ENCODE measurements at regions of chr19 and their contacts with region 1.

Region 1: DNA sequence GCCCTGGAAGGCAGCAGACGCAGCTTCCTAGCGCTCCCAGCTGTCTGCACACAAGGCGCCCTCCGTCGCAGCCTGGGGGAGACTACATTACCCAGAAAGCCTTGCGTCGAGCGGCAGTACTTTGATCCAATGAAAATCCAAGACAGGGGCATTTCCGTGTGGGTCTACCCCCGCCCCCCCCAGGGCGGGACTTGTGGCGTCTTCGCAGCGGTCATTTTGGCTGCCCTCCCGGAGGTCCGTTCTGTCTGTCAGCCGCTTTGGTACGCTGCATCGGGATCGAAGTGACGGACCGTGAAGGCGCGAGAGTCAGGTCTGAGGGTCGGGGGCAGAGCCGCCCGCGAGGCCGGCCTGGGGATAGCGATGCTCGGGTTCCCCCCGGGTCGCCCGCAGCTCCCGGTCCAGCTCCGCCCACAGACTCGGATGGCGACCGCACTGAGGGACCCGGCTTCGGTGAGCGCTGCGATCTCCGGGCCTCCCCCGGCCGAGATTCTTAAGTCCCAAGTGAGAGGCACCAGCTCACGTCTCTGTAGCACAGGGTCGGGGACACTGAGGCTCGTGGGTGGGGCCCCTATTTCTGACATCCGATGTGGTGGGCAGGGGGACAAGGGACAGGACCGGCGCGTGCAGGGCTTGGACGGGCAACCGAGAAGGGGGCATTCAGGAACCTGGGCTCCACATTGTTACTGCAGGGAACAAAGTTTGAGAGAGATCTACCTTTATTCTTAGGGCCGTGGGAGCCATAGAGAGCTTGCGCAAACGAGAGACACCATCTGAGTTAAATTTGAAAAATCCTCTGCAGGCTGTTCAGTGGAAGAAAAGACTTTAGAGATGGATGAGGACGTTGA is at the start of gene ZNF211:
- DNase-seq: peak; percentile 75 to 94 (median 85)
- ATAC-seq: peak; percentile 97 to 99
- H3K4me3 Mint-ChIP-seq: peak within 1 kb of the TSS; percentile 84 to 97 (median 94)
- H3K27ac Mint-ChIP-seq: peak within 1 kb of the TSS; percentile 78 to 96 (median 94)
- H3K4me1 Mint-ChIP-seq: peaks cover 14 to 29% (median 25%) of the 10 kb centered on the region in 4 donors
- H3K27me3 Mint-ChIP-seq: no peaks in the 10 kb centered on the region
- polyA plus RNA-seq, gene ZNF211: 13.5 to 18.5 (median 15.5) TPM

Region 2: GRCh38 chr19:57559404-57560025 is 73.7 kb before region 1 on chr19 and contains the start of gene ZNF550:
- POLR2A ChIA-PET with region 1: no interaction called
- DNase-seq: peak; percentile 78 to 94 (median 84)
- ATAC-seq: peak; percentile 96 to 97
- H3K4me3 Mint-ChIP-seq: peak within 1 kb of the TSS; percentile 95 to 99 (median 98)
- H3K27ac Mint-ChIP-seq: peak within 1 kb of the TSS; percentile 88 to 98 (median 95)
- H3K4me1 Mint-ChIP-seq: peaks cover 28 to 46% (median 36%) of the 10 kb centered on the region in 4 donors
- H3K27me3 Mint-ChIP-seq: peaks cover 0 to 5% (median 0%) of the 10 kb centered on the region in 5 donors
- polyA plus RNA-seq, gene ZNF550: 4.1 to 17.8 (median 6.1) TPM

Region 3: GRCh38 chr19:57613941-57614743 is 19.1 kb before region 1 on chr19 and contains the start of gene ZNF134:
- POLR2A ChIA-PET with region 1: interaction called, 22 read pairs
- DNase-seq: peak; percentile 80 to 95 (median 88)
- ATAC-seq: peak; percentile 99 to 100
- H3K4me3 Mint-ChIP-seq: peak within 1 kb of the TSS; percentile 86 to 94 (median 92)
- H3K27ac Mint-ChIP-seq: peak within 1 kb of the TSS; percentile 67 to 94 (median 89)
- H3K4me1 Mint-ChIP-seq: peaks cover 28 to 41% (median 38%) of the 10 kb centered on the region in 4 donors
- H3K27me3 Mint-ChIP-seq: no peaks in the 10 kb centered on the region
- polyA plus RNA-seq, gene ZNF134: 9.6 to 15.1 (median 13.7) TPM

Region 4: DNA sequence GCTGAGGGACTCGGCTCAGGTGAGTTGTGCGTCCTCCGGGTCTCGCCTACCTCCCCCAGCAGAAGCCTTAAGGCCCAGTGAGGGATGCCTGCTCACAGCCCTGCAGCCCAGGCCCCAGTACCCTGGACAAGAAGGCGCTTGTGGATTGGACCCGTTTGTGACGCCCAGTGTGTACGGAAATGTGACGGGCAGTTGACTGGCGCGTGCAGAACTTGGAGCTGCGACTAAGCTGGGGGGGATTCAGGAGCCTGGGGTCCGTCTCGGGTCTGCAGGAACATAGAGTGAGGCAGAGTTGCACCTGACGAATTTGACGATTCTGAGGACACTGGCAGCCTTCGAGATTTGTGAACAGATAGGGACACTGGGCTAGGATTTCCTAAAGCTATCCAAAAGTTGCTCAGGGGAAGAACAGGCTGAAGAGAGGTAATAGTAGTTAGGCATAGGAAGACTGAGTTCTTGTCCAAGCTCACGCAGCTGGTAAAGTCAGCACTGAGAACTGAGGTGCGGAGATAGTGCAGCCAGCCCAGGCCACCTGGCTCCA is 49.1 kb after region 1 on chr19:
- POLR2A ChIA-PET with region 1: interaction called, 20 read pairs
- DNase-seq: no peak
- ATAC-seq: no peak
- H3K4me3 Mint-ChIP-seq: peak overlapping the region; percentile 96 to 99 (median 98)
- H3K27ac Mint-ChIP-seq: peak overlapping the region; percentile 94 to 99 (median 98)
- H3K4me1 Mint-ChIP-seq: peaks cover 26 to 41% (median 38%) of the 10 kb centered on the region in 4 donors
- H3K27me3 Mint-ChIP-seq: peaks cover 3 to 14% (median 5%) of the 10 kb centered on the region in 5 donors